ENCODE measurements at regions of chr1 and their contacts with region 1.

Region 1: GRCh38 chr1:12124693-12125421 is 41.9 kb upstream of the TNFRSF1B start:
- DNase-seq: peak; percentile 47 to 94 (median 74)

Region 2: DNA sequence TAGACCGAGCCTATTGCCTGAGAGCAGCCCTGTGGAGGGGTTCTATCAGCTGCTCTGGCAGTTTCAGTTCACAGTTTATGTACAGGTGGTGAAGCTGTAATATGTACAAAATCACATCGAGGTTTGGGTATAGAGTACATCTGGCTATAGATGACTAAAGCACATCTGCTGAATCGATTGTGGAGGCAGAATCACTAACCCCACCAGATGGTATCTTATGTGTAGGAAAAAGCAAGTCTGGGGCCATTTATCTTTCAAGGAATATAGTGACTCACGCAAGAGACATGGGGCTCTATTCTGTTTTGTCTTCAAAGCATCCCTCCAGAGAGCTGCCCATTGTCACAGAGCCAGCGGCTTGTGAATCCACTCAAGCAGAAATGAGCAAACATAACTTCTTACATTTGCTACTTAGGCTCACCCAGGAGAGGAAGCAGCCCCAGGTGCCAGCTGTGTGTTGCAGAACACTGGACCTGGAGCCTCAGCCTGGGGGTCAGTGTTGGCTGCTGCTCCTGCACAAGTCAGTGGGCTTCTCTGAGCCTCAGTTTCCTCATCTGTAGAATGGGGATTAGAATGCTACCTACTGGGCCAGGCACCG is 84.3 kb before region 1 on chr1:
- intact Hi-C with region 1: no loop called
- DNase-seq: no peak

Region 3: DNA sequence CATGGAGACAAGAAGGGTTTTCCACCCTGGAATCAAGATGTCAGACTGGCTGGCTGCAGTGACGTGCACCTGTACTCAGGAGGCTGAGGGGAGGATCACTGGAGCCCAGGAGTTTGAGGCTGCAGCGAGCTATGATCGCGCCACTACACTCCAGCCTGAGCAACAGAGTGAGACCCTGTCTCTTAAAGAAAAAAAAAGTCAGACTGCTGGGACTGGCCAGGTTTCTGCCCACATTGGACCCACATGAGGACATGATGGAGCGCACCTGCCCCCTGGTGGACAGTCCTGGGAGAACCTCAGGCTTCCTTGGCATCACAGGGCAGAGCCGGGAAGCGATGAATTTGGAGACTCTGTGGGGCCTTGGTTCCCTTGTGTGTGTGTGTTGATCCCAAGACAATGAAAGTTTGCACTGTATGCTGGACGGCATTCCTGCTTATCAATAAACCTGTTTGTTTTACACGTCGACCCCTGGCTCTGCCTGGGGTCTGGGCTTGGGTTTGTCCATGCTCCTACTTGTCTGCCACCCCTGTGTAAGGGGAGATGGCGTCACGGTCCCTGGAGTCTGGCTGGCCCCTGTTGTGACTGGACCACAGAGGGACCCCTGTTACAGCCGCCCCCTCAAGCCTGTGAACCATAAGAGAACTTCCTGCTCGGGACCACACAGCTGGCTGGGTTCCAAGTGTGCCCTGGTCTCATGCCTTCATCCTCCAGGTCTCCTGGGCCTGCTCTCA is 84.1 kb after region 1 on chr1:
- intact Hi-C with region 1: loop called (anchors 1 kb)
- DNase-seq: peak; percentile 69 to 98 (median 92)

Region 4: GRCh38 chr1:12658531-12659453 is 533.9 kb after region 1 on chr1:
- intact Hi-C with region 1: loop called (anchors 10 kb)
- DNase-seq: peak; percentile 40 to 92 (median 76)